CD4-positive, alpha-beta T cell (primary cell): ENCODE measurements at regions of chrX and their contacts with region 1.

Region 1: GRCh38 chrX:2640275-2641150 is 50.6 kb upstream of the CD99 start:
- DNase-seq: no peak
- ATAC-seq: no peak
- H3K4me3 ChIP-seq: no peak overlapping the region
- H3K4me3 Mint-ChIP-seq: no peak overlapping the region
- H3K27ac ChIP-seq: no peak overlapping the region
- H3K27ac Mint-ChIP-seq: no peak overlapping the region
- H3K4me1 ChIP-seq: no peaks in the 10 kb centered on the region
- H3K4me1 Mint-ChIP-seq: peaks cover 4% of the 10 kb centered on the region
- H3K27me3 ChIP-seq: no peaks in the 10 kb centered on the region
- H3K27me3 Mint-ChIP-seq: no peaks in the 10 kb centered on the region
- CTCF ChIP-seq: no peak

Region 2: GRCh38 chrX:2627272-2627867 is 13.1 kb before region 1 on chrX:
- CTCF ChIA-PET with region 1: no interaction called
- POLR2A ChIA-PET with region 1: no interaction called
- intact Hi-C with region 1: no loop called
- DNase-seq: peak in 9 of 14 experiments; percentile 22 to 69 (median 44)
- ATAC-seq: no peak
- H3K4me3 ChIP-seq: no peak overlapping the region
- H3K4me3 Mint-ChIP-seq: no peak overlapping the region
- H3K27ac ChIP-seq: no peak overlapping the region
- H3K27ac Mint-ChIP-seq: peak overlapping the region; percentile 54
- H3K4me1 ChIP-seq: peaks cover 8% of the 10 kb centered on the region
- H3K4me1 Mint-ChIP-seq: peaks cover 38% of the 10 kb centered on the region
- H3K27me3 ChIP-seq: no peaks in the 10 kb centered on the region
- H3K27me3 Mint-ChIP-seq: no peaks in the 10 kb centered on the region
- CTCF ChIP-seq: peak; percentile 46

Region 3: GRCh38 chrX:2811271-2811670 is 170.8 kb after region 1 on chrX:
- CTCF ChIA-PET with region 1: no interaction called
- POLR2A ChIA-PET with region 1: no interaction called
- intact Hi-C with region 1: loop called in 1 of 2 experiments (anchors 1 kb)
- DNase-seq: no peak
- ATAC-seq: no peak
- H3K4me3 ChIP-seq: no peak overlapping the region
- H3K4me3 Mint-ChIP-seq: no peak overlapping the region
- H3K27ac ChIP-seq: no peak overlapping the region
- H3K27ac Mint-ChIP-seq: no peak overlapping the region
- H3K4me1 ChIP-seq: peaks cover 3% of the 10 kb centered on the region
- H3K4me1 Mint-ChIP-seq: no peaks in the 10 kb centered on the region
- H3K27me3 ChIP-seq: no peaks in the 10 kb centered on the region
- H3K27me3 Mint-ChIP-seq: peaks cover 6% of the 10 kb centered on the region
- CTCF ChIP-seq: no peak

Region 4: GRCh38 chrX:3295756-3296155 is 655.2 kb after region 1 on chrX:
- CTCF ChIA-PET with region 1: no interaction called
- POLR2A ChIA-PET with region 1: no interaction called
- intact Hi-C with region 1: no loop called
- DNase-seq: no peak
- ATAC-seq: no peak
- H3K4me3 ChIP-seq: no peak overlapping the region
- H3K4me3 Mint-ChIP-seq: no peak overlapping the region
- H3K27ac ChIP-seq: no peak overlapping the region
- H3K27ac Mint-ChIP-seq: no peak overlapping the region
- H3K4me1 ChIP-seq: no peaks in the 10 kb centered on the region
- H3K4me1 Mint-ChIP-seq: no peaks in the 10 kb centered on the region
- H3K27me3 ChIP-seq: no peaks in the 10 kb centered on the region
- H3K27me3 Mint-ChIP-seq: no peaks in the 10 kb centered on the region
- CTCF ChIP-seq: no peak

Region 5: DNA sequence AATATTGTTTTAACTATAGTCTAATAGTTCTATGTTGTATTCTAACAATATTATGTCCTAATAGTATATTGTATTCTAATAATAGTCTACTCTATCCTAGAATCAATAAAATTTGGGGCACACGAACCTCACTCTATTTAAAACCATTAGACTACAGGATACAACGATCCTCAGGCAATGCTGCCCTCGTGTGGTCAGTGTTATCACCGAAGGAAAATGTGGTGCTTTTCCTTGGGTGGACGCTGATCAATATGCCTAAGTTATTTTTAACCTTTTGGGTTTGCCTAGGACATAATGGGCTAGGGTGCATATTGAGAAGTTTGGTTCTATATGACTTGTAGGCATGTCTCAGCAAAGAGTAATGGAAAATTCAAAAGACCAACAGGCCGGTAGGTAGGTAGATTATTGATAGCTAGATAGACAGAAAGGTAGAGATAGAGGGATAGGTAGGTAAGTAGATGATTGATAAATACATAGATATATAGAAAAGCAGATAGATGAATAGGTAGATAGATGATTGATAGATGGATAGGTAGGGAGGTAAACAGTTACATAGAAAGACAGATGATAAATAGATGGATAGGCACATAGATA is 997.9 kb after region 1 on chrX:
- CTCF ChIA-PET with region 1: no interaction called
- POLR2A ChIA-PET with region 1: no interaction called
- intact Hi-C with region 1: loop called in 1 of 2 experiments (anchors 10 kb)
- DNase-seq: peak in 11 of 14 experiments; percentile 5 to 54 (median 21)
- ATAC-seq: no peak
- H3K4me3 ChIP-seq: no peak overlapping the region
- H3K4me3 Mint-ChIP-seq: no peak overlapping the region
- H3K27ac ChIP-seq: no peak overlapping the region
- H3K27ac Mint-ChIP-seq: no peak overlapping the region
- H3K4me1 ChIP-seq: no peaks in the 10 kb centered on the region
- H3K4me1 Mint-ChIP-seq: no peaks in the 10 kb centered on the region
- H3K27me3 ChIP-seq: no peaks in the 10 kb centered on the region
- H3K27me3 Mint-ChIP-seq: no peaks in the 10 kb centered on the region
- CTCF ChIP-seq: peak; percentile 58